ENCODE measurements at regions of chr2 and their contacts with region 1.

Region 1: DNA sequence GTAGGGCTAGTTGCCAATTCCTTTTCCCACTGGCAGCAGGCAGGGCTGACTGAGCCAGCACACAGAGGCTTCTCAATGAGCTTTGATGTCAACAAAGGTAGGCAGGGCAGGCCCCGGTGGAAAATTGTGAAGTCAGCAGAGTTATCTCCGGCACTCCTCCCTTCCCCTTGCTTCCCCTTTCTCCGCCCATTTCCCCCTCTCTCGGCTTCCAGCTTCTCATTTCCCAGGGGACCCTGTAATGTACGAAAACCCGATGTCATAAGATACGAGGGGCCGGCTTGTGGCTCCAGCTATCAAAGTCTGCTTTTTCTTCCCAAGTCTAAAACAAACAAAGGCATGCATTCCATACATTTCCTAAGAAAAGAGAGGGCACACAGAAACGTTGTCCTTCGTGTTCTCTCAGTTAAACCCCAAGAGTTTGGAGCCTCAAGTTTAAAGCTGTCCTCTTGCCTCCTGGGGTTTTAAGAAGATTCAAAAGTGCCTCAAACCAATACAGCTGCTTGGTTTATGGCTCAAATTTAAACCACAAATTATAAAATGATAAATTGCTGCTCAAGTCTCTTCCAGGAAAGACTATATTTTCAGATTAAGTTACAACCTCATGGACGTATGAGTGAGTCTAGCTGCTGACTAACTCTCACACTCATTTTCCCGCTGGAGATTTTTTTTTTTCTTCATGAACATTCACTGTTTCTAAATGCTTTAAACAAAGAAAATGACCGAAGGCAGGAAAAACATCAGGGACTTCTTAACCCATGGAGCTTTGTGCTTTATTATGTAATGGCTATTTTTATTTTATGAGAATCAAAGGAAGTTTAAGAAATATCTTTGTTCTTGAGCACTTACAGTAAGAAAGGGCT is 27.2 kb upstream of the EML4 start:
- DNase-seq: no peak
- ATAC-seq: peak; percentile 49
- H3K4me3 ChIP-seq: no peak overlapping the region
- H3K27ac ChIP-seq: no peak overlapping the region
- H3K4me1 ChIP-seq: 0 out of 2 replicates have a peak, but pooled peaks cover 6% of the 10 kb centered on the region
- H3K27me3 ChIP-seq: no peaks in the 10 kb centered on the region
- CTCF ChIP-seq: no peak
- EP300 ChIP-seq: no peak
- POLR2A ChIP-seq: no peak
- RAD21 ChIP-seq: no peak

Region 2: DNA sequence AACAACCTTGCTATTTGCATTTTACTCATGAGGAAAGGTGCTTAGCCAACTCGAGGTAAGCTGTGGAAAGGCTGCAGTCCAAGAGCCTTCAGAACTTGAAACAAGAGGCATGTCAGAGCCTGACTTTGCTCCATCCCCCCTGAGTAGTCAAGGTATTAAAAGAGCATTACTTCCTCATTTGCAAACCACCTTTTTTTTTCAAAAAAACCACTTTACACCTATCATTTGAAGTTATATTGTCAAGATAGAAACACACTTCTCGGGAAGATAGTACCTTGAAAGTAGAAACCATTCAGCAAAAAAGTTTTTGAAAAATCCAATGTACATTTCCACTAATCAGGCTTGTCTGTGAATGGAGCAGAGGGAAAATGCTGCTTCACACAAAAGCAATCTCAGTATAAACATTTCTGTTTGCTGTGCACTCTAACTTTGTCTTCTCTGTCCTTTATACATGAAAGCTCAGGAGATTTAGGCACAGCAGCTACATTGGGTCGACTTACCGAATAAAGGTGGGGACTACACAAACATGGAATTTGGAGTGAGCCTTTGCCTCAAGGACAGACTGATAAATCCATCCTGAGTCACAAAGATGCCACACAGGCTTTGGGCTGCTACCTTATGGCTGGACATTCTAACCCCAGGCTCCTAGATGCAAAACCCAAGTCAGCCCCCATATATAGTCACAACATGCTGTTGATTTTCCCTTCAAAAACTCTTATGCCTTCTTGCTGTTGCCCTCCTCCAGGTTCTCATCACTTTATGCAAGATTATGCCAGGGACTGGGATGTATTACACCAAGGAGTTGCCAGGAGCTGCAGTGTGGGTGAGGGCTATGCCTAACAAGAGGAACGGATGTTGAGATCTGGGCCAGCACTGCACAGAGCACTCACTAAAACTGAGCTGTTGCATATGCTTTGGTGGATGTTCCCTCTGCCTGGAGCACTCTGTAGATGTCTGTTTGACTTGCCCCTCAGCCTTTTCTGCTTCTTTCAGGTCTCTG is 14.2 kb before region 1 on chr2:
- CTCF ChIA-PET with region 1: interaction called, 15 read pairs
- POLR2A ChIA-PET with region 1: interaction called, 9 read pairs
- RAD21 ChIA-PET with region 1: interaction called, 8 read pairs
- SMC1A ChIA-PET with region 1: interaction called, 19 read pairs
- in situ Hi-C with region 1: no loop called
- intact Hi-C with region 1: no loop called
- DNase-seq: peak; percentile 83
- ATAC-seq: peak; percentile 77
- H3K4me3 ChIP-seq: peak overlapping the region; percentile 47
- H3K27ac ChIP-seq: peak overlapping the region; percentile 73
- H3K4me1 ChIP-seq: peaks cover 63% of the 10 kb centered on the region
- H3K27me3 ChIP-seq: no peaks in the 10 kb centered on the region
- CTCF ChIP-seq: no peak
- EP300 ChIP-seq: peak; percentile 69 to 70; a peak in 2 of 4 replicates
- POLR2A ChIP-seq: 0 out of 2 replicates have a peak, but pooled peaks have one; percentile 32
- RAD21 ChIP-seq: peak; percentile 28; the same call in 1 of the 2 replicates

Region 3: GRCh38 chr2:42161444-42161843 is 19.5 kb after region 1 on chr2:
- CTCF ChIA-PET with region 1: interaction called, 4 read pairs
- POLR2A ChIA-PET with region 1: interaction called, 4 read pairs
- RAD21 ChIA-PET with region 1: interaction called, 4 read pairs
- SMC1A ChIA-PET with region 1: interaction called, 6 read pairs
- in situ Hi-C with region 1: no loop called
- intact Hi-C with region 1: loop called (anchors 2 kb)
- DNase-seq: no peak
- ATAC-seq: no peak
- H3K4me3 ChIP-seq: no peak overlapping the region
- H3K27ac ChIP-seq: no peak overlapping the region
- H3K4me1 ChIP-seq: no peaks in the 10 kb centered on the region
- H3K27me3 ChIP-seq: no peaks in the 10 kb centered on the region
- CTCF ChIP-seq: no peak
- EP300 ChIP-seq: no peak
- POLR2A ChIP-seq: no peak
- RAD21 ChIP-seq: no peak

Region 4: DNA sequence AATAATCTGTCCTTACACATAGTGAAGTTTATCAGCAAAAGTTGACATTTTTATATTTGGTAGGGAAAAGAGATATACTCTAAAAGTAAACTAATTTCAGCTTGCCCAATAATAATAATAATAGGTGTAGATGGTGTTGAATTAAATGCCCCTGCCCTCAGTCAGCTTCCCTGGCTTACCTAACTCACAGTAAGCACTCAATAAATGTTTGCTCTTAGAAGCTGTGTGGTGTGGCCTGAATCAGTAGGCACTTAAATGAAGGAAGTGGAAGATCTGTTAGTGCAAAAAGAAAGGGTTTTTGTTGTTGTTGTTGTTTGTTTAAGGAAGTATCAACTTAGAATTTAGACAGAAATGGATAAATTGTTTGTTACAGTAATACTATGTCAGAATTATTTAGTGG is 63.4 kb after region 1 on chr2:
- CTCF ChIA-PET with region 1: no interaction called
- POLR2A ChIA-PET with region 1: no interaction called
- RAD21 ChIA-PET with region 1: no interaction called
- SMC1A ChIA-PET with region 1: no interaction called
- in situ Hi-C with region 1: no loop called
- intact Hi-C with region 1: no loop called
- DNase-seq: no peak
- ATAC-seq: peak; percentile 39; the same call in 1 of the 3 replicates
- H3K4me3 ChIP-seq: no peak overlapping the region
- H3K27ac ChIP-seq: no peak overlapping the region
- H3K4me1 ChIP-seq: no peaks in the 10 kb centered on the region
- H3K27me3 ChIP-seq: no peaks in the 10 kb centered on the region
- CTCF ChIP-seq: no peak
- EP300 ChIP-seq: no peak
- POLR2A ChIP-seq: no peak
- RAD21 ChIP-seq: no peak

Region 5: GRCh38 chr2:42494355-42495233 is 352.7 kb after region 1 on chr2:
- CTCF ChIA-PET with region 1: no interaction called
- POLR2A ChIA-PET with region 1: no interaction called
- RAD21 ChIA-PET with region 1: no interaction called
- SMC1A ChIA-PET with region 1: no interaction called
- in situ Hi-C with region 1: no loop called
- intact Hi-C with region 1: no loop called
- DNase-seq: peak; percentile 35
- ATAC-seq: peak; percentile 90
- H3K4me3 ChIP-seq: peak overlapping the region; percentile 76
- H3K27ac ChIP-seq: no peak overlapping the region
- H3K4me1 ChIP-seq: no peaks in the 10 kb centered on the region
- H3K27me3 ChIP-seq: peaks cover 3 to 13% of the 10 kb centered on the region in 2 experiments
- CTCF ChIP-seq: peak; percentile 83 to 90 (median 89)
- EP300 ChIP-seq: no peak
- POLR2A ChIP-seq: no peak
- RAD21 ChIP-seq: peak; percentile 91

Region 6: DNA sequence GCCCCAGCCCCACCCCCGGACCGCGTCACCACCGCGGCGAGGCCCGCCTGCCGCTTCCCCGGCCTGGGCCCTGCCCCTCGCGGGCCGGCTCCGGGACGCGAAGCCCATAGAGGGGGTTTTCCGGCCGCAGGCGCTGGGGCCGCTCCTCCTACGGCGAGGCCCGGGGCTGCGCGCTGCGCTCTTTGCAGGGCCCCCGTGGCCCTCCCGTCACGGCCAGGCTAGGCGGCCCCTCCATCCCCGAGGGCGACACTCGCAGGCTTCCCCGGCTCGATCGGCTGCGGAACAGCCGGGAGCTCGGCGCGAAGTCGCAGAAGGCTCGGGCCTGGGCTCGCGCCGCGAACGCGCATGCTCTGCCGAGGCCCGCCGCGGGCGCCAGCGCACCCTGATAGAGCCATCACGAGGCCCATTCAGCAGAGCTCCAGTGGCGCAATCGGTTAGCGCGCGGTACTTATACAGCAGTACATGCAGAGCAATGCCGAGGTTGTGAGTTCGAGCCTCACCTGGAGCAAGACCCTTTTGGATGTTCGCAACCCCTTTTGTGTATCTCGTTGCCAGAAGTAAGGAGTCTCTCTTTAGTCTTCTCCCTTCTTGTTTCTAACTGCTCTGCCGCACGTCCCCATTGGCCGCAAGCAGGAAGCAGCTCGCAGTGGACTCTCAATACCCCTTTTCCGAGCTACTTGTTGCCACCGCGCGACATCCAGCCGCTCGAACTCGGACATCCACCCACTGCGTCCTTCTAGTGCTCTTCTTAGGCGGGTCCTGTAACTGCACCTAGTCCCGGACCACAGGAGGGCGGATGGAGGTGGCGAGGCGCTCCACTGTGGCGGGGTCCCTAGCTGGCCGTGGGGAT is 668.4 kb after region 1 on chr2:
- CTCF ChIA-PET with region 1: no interaction called
- POLR2A ChIA-PET with region 1: no interaction called
- RAD21 ChIA-PET with region 1: no interaction called
- SMC1A ChIA-PET with region 1: no interaction called
- in situ Hi-C with region 1: no loop called
- intact Hi-C with region 1: no loop called
- DNase-seq: peak; percentile 95
- ATAC-seq: peak; percentile 84
- H3K4me3 ChIP-seq: peak overlapping the region; percentile 68
- H3K27ac ChIP-seq: peak overlapping the region; percentile 97
- H3K4me1 ChIP-seq: peaks cover 9% of the 10 kb centered on the region
- H3K27me3 ChIP-seq: no peaks in the 10 kb centered on the region
- CTCF ChIP-seq: 0 out of 6 replicates have a peak, but pooled peaks of 1 of the 3 experiments have one; percentile 3
- EP300 ChIP-seq: peak; percentile 18 to 88; a peak in 1 of 4 replicates
- POLR2A ChIP-seq: peak; percentile 90
- RAD21 ChIP-seq: no peak